Mammary epithelial cell (primary cell): ENCODE measurements at regions of chr11 and their contacts with region 1.

Region 1: GRCh38 chr11:118530408-118531339 is at the start of gene TMEM25:
- DNase-seq: peak; percentile 57
- H3K4me3 ChIP-seq: peak within 1 kb of the TSS; percentile 58 to 75 (median 70)
- H3K27ac ChIP-seq: no peak within 1 kb of the TSS
- H3K4me1 ChIP-seq: peaks cover 14% of the 10 kb centered on the region
- H3K27me3 ChIP-seq: no peaks in the 10 kb centered on the region
- CTCF ChIP-seq: no peak
- total RNA-seq, gene TMEM25: 17.2 to 46.8 TPM

Region 2: DNA sequence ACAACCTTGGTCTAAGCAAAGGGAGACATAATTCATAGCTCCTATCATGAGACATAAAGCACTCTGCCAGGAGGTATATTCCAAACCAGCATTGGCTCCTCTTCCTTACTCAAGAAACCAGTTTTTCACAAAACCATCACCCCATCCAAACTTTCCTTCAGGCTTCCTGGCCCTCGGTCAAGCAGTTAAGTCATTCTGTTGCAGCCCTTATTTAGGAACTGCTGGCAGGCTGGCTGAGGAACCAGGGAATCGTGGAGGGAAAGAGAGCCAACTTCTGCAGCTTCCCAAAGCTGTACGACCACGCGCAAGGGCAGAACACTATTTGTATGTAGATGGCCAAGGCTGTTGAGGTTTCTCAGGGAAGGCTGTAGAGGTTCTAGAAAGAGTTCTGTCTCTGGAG is 34.4 kb after region 1 on chr11:
- CTCF ChIA-PET with region 1: no interaction called
- dilution Hi-C with region 1: no loop called
- in situ Hi-C with region 1: no loop called
- intact Hi-C with region 1: loop called (anchors 1 kb)
- DNase-seq: peak; percentile 13
- H3K4me3 ChIP-seq: peak overlapping the region in 2 of 3 experiments; percentile 34 to 63
- H3K27ac ChIP-seq: no peak overlapping the region
- H3K4me1 ChIP-seq: peaks cover 4% of the 10 kb centered on the region
- H3K27me3 ChIP-seq: no peaks in the 10 kb centered on the region
- CTCF ChIP-seq: no peak

Region 3: GRCh38 chr11:118649941-118650340 is 119.3 kb after region 1 on chr11:
- CTCF ChIA-PET with region 1: no interaction called
- dilution Hi-C with region 1: no loop called
- in situ Hi-C with region 1: no loop called
- intact Hi-C with region 1: no loop called
- DNase-seq: no peak
- H3K4me3 ChIP-seq: no peak overlapping the region
- H3K27ac ChIP-seq: no peak overlapping the region
- H3K4me1 ChIP-seq: no peaks in the 10 kb centered on the region
- H3K27me3 ChIP-seq: no peaks in the 10 kb centered on the region
- CTCF ChIP-seq: no peak